ENCODE measurements at regions of chr4 and their contacts with region 1.

Region 1: GRCh38 chr4:16537926-16538325 is 311.7 kb upstream of the TAPT1 start:
- DNase-seq: no peak
- H3K4me3 ChIP-seq: no peak overlapping the region
- H3K27ac ChIP-seq: no peak overlapping the region
- H3K4me1 ChIP-seq: no peaks in the 10 kb centered on the region
- H3K27me3 ChIP-seq: no peaks in the 10 kb centered on the region
- CTCF ChIP-seq: no peak

Region 2: DNA sequence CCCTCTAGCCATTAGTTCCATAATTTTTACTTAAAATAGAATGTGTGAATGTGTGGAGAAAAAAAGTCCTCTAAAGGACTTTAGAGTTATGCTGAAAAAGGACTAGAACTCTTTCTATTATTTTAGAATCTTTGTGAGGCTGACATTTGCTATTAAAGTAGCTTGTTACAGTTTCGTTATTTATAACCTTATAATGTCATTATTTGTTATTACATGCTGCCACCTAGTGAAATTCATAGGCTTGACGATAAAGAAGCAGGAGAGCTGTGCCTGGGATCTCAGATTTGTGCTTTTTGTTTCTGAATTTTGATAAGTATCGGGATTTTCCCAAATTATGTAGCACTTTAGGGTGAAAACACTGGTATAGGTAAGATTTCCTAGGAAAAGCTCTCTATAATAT is 273.1 kb before region 1 on chr4:
- CTCF ChIA-PET with region 1: no interaction called
- dilution Hi-C with region 1: no loop called
- in situ Hi-C with region 1: no loop called
- intact Hi-C with region 1: no loop called
- DNase-seq: peak; percentile 24
- H3K4me3 ChIP-seq: no peak overlapping the region
- H3K27ac ChIP-seq: no peak overlapping the region
- H3K4me1 ChIP-seq: peaks cover 13% of the 10 kb centered on the region
- H3K27me3 ChIP-seq: no peaks in the 10 kb centered on the region
- CTCF ChIP-seq: peak; percentile 55

Region 3: DNA sequence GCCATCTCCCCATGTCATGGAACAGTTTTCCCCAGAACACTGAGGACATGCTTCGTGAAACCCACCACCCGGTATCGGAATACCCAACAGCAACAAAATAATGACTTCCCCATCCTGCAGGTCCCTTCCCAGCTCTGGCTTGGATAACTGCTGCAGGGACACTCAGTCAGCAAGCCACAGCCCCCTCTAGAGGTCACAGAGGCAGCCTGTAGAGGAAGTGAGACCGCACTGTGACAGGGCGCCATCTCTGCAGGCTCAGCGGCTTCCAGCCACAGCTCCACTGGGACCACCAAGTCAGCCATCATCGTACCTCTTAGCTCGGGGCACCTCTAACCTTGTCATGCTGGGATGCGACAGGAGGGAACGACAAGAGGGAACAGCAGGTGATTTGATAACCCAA is 44.6 kb after region 1 on chr4:
- CTCF ChIA-PET with region 1: no interaction called
- dilution Hi-C with region 1: loop called (anchors 5 kb)
- in situ Hi-C with region 1: no loop called
- intact Hi-C with region 1: no loop called
- DNase-seq: no peak
- H3K4me3 ChIP-seq: no peak overlapping the region
- H3K27ac ChIP-seq: no peak overlapping the region
- H3K4me1 ChIP-seq: no peaks in the 10 kb centered on the region
- H3K27me3 ChIP-seq: no peaks in the 10 kb centered on the region
- CTCF ChIP-seq: no peak

Region 4: GRCh38 chr4:16667464-16667863 is 129.5 kb after region 1 on chr4:
- CTCF ChIA-PET with region 1: no interaction called
- dilution Hi-C with region 1: loop called (anchors 5 kb)
- in situ Hi-C with region 1: no loop called
- intact Hi-C with region 1: no loop called
- DNase-seq: peak; percentile 1
- H3K4me3 ChIP-seq: no peak overlapping the region
- H3K27ac ChIP-seq: no peak overlapping the region
- H3K4me1 ChIP-seq: no peaks in the 10 kb centered on the region
- H3K27me3 ChIP-seq: no peaks in the 10 kb centered on the region
- CTCF ChIP-seq: no peak